ENCODE measurements at regions of chr5 and their contacts with region 1.

Region 1: GRCh38 chr5:102223542-102224477 is 72.3 kb downstream of the SLCO4C1 start:
- DNase-seq: peak; percentile 68
- ATAC-seq: no peak
- H3K4me3 ChIP-seq: no peak overlapping the region; a peak in 1 of 6 replicates
- H3K27ac ChIP-seq: no peak overlapping the region
- H3K4me1 ChIP-seq: peaks cover 31% of the 10 kb centered on the region
- H3K27me3 ChIP-seq: no peaks in the 10 kb centered on the region
- CTCF ChIP-seq: peak; percentile 67
- EP300 ChIP-seq: no peak
- POLR2A ChIP-seq: no peak
- RAD21 ChIP-seq: no peak

Region 2: GRCh38 chr5:101942321-101943215 is 281.2 kb before region 1 on chr5:
- CTCF ChIA-PET with region 1: interaction called, 17 read pairs
- POLR2A ChIA-PET with region 1: no interaction called
- in situ Hi-C with region 1: loop called (anchors 5 kb)
- intact Hi-C with region 1: loop called (anchors 1 kb)
- DNase-seq: peak; percentile 27
- ATAC-seq: peak; percentile 93
- H3K4me3 ChIP-seq: no peak overlapping the region
- H3K27ac ChIP-seq: no peak overlapping the region
- H3K4me1 ChIP-seq: no peaks in the 10 kb centered on the region
- H3K27me3 ChIP-seq: no peaks in the 10 kb centered on the region
- CTCF ChIP-seq: peak; percentile 87
- EP300 ChIP-seq: no peak
- POLR2A ChIP-seq: no peak
- RAD21 ChIP-seq: peak; percentile 70

Region 3: DNA sequence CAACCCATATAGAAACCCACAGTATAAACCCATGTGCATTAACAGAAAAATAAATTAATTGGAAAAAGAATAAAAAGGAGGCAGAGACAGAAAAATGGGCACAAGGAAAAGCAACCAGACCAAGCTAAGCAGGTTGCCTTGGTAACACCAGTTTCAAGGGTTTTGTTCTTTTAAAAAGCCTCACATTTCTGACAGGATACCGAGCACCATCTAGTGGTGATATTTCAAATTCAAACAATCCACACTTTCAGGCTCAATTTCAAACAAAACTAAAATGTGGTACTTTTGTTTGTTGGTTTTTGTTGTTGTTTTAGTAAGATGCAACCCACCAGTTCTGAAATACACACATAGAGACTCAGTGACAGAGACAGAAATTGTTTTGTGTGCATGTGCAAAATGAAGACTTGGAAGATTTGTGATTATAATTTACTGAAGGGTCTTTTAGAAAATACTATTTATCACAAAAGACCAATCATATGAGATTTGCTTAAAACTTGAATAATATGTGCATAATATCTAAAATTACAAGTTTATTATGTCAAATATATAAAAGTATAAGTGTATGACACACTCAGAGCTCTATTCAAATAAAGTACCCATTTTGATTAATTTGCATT is 246.0 kb before region 1 on chr5:
- CTCF ChIA-PET with region 1: interaction called, 3 read pairs
- POLR2A ChIA-PET with region 1: no interaction called
- in situ Hi-C with region 1: no loop called
- intact Hi-C with region 1: loop called (anchors 1 kb)
- DNase-seq: peak; percentile 49
- ATAC-seq: peak; percentile 57; the same call in 1 of the 3 replicates
- H3K4me3 ChIP-seq: no peak overlapping the region
- H3K27ac ChIP-seq: no peak overlapping the region
- H3K4me1 ChIP-seq: no peaks in the 10 kb centered on the region
- H3K27me3 ChIP-seq: no peaks in the 10 kb centered on the region
- CTCF ChIP-seq: peak; percentile 73
- EP300 ChIP-seq: no peak
- POLR2A ChIP-seq: no peak
- RAD21 ChIP-seq: peak; percentile 38; the same call in 1 of the 2 replicates

Region 4: DNA sequence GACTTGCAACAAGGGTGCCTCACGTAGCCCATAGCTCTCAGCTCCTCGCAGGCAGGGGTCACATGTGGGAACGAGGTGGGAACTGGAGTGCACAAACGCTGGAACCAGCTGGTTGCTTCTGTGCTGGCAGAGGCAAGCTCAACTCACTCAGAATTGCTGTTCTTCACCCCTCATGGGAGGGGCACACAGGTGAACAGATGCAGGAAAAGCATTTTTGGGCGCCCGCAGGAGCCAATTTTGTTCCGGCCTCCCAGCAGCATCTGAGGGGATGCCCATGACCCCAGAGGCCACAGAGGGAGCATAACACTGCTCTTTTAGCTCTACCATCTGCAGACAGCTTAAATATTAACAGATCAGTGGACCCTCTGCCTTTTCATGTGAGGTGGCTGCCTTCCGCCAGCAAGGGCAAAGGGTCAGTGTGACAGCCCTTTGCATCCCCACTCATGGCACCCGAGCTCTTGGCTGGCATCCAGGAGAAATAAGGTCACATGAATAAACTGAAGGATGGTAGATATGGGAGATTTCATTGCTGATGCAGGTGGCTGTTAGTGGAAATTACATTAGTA is 124.0 kb before region 1 on chr5:
- CTCF ChIA-PET with region 1: no interaction called
- POLR2A ChIA-PET with region 1: interaction called, 7 read pairs
- in situ Hi-C with region 1: no loop called
- intact Hi-C with region 1: loop called (anchors 1 kb)
- DNase-seq: peak; percentile 97
- ATAC-seq: peak; percentile 100
- H3K4me3 ChIP-seq: peak overlapping the region in 1 of 3 experiments; percentile 55; a peak in 2 of 6 replicates
- H3K27ac ChIP-seq: peak overlapping the region; percentile 90
- H3K4me1 ChIP-seq: peaks cover 45% of the 10 kb centered on the region
- H3K27me3 ChIP-seq: no peaks in the 10 kb centered on the region
- CTCF ChIP-seq: no peak
- EP300 ChIP-seq: peak in 1 of 2 experiments; percentile 88; a peak in 2 of 4 replicates
- POLR2A ChIP-seq: peak in 1 of 2 experiments; percentile 49; a peak in 1 of 4 replicates
- RAD21 ChIP-seq: 0 out of 2 replicates have a peak, but pooled peaks have one; percentile 13

Region 5: GRCh38 chr5:102138243-102138653 is 85.6 kb before region 1 on chr5:
- CTCF ChIA-PET with region 1: no interaction called
- POLR2A ChIA-PET with region 1: no interaction called
- in situ Hi-C with region 1: no loop called
- intact Hi-C with region 1: loop called (anchors 5 kb)
- DNase-seq: peak; percentile 94
- ATAC-seq: peak; percentile 100
- H3K4me3 ChIP-seq: peak overlapping the region; percentile 21 to 31 (median 24); a peak in 3 of 6 replicates
- H3K27ac ChIP-seq: peak overlapping the region; percentile 70
- H3K4me1 ChIP-seq: peaks cover 38% of the 10 kb centered on the region
- H3K27me3 ChIP-seq: no peaks in the 10 kb centered on the region
- CTCF ChIP-seq: no peak
- EP300 ChIP-seq: peak in 1 of 2 experiments; percentile 78; a peak in 1 of 4 replicates
- POLR2A ChIP-seq: no peak
- RAD21 ChIP-seq: no peak

Region 6: DNA sequence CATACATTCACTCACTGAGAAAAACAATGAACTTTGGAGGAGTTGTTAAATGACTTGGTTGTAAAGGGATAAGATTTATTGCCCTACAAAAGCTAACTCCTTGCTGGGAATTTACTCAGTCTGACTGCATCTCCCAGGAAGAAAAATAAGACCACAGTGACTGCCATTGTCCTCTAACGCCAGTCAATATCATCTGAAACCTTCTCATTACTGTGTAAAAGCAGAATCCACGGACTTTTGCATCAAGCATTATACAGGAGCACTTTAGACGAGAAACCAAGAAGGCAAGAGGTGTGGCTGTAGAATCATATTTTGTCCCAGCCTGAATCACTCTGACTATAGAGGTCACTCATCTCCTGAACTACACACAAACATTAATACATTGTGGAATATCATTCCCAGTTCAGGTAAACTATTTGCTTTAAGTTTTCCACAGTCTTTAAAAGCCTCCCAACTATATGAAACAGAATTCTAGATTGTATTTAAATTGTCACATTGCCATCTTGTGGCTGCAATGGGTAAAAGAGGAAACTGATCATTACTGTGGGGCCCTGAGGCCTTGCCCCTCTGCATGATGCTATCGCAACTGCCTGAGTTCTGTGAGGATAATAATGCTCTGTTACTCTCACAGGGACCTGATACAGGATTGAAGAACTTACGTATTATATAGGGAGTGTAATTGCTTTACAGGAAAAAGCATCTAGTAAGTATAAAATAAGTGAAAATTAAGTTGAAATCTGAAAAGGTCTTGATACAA is 70.6 kb before region 1 on chr5:
- CTCF ChIA-PET with region 1: interaction called, 12 read pairs
- POLR2A ChIA-PET with region 1: no interaction called
- in situ Hi-C with region 1: loop called (anchors 5 kb)
- intact Hi-C with region 1: loop called (anchors 2 kb)
- DNase-seq: peak; percentile 48
- ATAC-seq: peak; percentile 98
- H3K4me3 ChIP-seq: no peak overlapping the region
- H3K27ac ChIP-seq: no peak overlapping the region
- H3K4me1 ChIP-seq: peaks cover 20% of the 10 kb centered on the region
- H3K27me3 ChIP-seq: no peaks in the 10 kb centered on the region
- CTCF ChIP-seq: peak; percentile 81
- EP300 ChIP-seq: no peak
- POLR2A ChIP-seq: no peak
- RAD21 ChIP-seq: peak; percentile 58

Region 7: DNA sequence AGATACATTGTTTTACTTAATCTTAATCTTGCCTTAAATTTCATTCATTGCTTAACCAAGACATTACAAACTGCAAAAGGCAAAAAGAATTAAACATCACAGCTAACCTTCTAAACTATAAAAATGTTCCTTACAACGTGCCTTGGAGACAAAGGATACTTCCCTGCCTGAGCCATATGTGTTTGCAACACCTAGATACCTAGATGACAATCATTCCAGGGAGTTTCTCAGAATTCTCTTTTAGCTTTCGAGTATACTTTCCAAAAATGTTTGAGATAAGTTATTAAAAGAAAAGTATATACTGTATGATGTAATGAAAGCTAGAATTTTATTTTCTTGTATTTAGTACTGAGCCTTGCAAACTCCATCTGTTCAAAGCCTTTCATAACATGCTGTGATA is 14.9 kb after region 1 on chr5:
- CTCF ChIA-PET with region 1: no interaction called
- POLR2A ChIA-PET with region 1: no interaction called
- in situ Hi-C with region 1: no loop called
- intact Hi-C with region 1: no loop called
- DNase-seq: no peak
- ATAC-seq: no peak
- H3K4me3 ChIP-seq: no peak overlapping the region
- H3K27ac ChIP-seq: no peak overlapping the region
- H3K4me1 ChIP-seq: peaks cover 9% of the 10 kb centered on the region
- H3K27me3 ChIP-seq: no peaks in the 10 kb centered on the region
- CTCF ChIP-seq: no peak
- EP300 ChIP-seq: no peak
- POLR2A ChIP-seq: no peak
- RAD21 ChIP-seq: no peak

Region 8: GRCh38 chr5:102296178-102296817 is 72.5 kb after region 1 on chr5 and contains the start of gene SLCO4C1:
- CTCF ChIA-PET with region 1: no interaction called
- POLR2A ChIA-PET with region 1: no interaction called
- in situ Hi-C with region 1: no loop called
- intact Hi-C with region 1: loop called (anchors 2 kb)
- DNase-seq: peak; percentile 70
- ATAC-seq: peak; percentile 97
- H3K4me3 ChIP-seq: peak within 1 kb of the TSS; percentile 47 to 90 (median 84)
- H3K27ac ChIP-seq: peak within 1 kb of the TSS; percentile 61
- H3K4me1 ChIP-seq: peaks cover 32% of the 10 kb centered on the region
- H3K27me3 ChIP-seq: no peaks in the 10 kb centered on the region
- CTCF ChIP-seq: peak; percentile 99
- EP300 ChIP-seq: peak in 1 of 2 experiments; percentile 19; a peak in 1 of 4 replicates
- POLR2A ChIP-seq: no peak; a peak in 2 of 4 replicates
- RAD21 ChIP-seq: peak; percentile 69
- total RNA-seq, gene SLCO4C1: 7.8 and 9.6 TPM in 2 replicates